ENCODE measurements at regions of chr11 and their contacts with region 1.

Region 1: GRCh38 chr11:9972989-9973388 is 309.1 kb downstream of the SWAP70 start:
- DNase-seq: no peak

Region 2: DNA sequence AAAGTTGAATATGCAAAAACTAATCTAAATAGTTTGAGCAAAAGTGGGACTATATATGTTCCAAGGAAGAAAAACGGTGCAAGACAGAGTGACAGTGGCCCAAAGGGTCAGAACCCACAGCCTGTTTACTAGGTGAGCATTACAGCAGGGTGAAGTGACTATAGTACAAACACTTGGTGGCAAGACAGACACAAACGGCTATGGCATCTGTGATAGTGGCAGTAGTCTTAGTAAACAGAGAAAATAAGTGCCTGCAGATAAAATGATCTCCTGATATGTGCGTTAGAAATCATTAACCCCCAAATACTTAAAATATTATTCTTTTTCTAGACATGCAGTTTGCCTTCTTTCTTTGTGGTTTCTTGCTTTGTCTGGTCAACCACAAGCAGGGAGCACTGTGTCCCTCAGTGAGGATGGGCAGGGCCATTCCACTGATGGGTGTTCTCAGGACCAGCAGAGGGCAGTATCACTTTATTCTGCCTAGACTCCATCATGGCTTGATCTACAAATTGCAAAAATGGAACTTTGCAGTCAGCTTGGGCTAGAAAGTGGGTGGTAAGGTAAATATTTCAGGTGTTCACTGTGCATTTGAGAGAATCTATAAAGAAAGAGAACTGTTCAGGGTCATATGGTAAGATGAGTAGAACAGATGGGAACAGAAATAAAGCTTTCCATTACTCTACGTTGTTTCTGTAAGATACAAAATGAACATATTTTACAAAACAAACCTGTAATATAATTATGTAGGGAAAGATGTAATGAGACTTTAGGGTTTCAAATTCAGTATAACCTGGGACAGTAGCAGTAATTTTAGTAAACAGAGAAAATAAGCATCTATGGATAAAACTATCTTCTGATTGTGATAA is 110.9 kb before region 1 on chr11:
- intact Hi-C with region 1: loop called (anchors 10 kb)
- DNase-seq: no peak

Region 3: DNA sequence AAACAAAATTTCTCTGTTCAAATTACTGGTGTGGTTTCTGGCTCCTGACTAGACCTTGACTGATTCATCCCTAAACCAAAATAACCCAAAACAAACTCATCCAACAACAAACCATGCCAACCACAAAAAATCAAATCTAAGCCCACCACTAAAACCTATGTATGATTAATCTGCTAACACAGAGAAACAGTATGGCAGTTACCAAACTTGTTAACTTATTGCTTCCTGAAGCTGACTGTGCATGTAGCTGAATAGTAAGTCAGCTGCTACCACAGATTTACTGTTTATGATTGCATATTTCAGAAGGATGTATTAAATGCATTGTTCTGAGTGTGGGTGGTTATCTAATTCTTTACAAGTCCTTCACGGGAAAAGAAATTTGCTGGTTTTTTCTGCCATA is 78.0 kb before region 1 on chr11:
- intact Hi-C with region 1: no loop called
- DNase-seq: no peak

Region 4: DNA sequence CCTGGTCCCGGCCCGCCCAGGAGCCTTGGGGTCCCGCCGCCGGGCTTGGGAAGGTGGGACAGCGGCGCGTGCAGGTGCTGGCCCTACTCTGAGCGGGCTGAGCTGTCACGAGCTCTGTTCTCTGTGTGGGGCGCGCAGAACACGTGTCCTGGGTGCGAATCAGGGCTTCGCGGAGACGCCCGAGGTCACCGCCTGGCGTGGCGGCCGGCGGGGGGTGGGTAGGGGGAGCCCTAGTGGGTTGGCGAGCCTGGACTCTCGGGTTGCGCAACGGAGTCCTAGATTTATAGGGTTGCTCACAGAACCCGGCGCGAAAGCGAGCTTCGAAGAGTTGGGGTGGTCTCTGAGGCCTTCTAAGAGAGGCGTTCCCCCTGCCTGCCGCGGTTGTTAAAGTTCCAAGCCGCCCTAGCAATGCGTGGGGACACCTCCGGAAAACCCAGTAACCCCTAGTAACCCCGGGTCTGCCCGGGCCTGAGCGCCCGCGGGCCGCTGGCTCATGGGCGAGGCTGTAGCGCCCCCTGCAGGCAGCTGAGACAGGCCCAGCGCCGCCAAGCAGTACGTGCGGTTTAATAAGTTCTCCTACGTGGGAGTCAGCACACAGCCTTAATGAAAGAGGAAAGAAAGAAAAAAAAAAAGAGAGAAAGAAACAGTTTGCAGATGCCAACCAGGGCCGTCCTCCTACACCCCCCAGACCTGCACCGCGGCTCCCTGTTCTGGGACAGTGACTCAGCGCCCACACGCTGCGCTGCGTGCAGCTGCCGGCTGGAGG is 334.6 kb after region 1 on chr11:
- intact Hi-C with region 1: loop called (anchors 2 kb)
- DNase-seq: peak; percentile 93

Region 5: DNA sequence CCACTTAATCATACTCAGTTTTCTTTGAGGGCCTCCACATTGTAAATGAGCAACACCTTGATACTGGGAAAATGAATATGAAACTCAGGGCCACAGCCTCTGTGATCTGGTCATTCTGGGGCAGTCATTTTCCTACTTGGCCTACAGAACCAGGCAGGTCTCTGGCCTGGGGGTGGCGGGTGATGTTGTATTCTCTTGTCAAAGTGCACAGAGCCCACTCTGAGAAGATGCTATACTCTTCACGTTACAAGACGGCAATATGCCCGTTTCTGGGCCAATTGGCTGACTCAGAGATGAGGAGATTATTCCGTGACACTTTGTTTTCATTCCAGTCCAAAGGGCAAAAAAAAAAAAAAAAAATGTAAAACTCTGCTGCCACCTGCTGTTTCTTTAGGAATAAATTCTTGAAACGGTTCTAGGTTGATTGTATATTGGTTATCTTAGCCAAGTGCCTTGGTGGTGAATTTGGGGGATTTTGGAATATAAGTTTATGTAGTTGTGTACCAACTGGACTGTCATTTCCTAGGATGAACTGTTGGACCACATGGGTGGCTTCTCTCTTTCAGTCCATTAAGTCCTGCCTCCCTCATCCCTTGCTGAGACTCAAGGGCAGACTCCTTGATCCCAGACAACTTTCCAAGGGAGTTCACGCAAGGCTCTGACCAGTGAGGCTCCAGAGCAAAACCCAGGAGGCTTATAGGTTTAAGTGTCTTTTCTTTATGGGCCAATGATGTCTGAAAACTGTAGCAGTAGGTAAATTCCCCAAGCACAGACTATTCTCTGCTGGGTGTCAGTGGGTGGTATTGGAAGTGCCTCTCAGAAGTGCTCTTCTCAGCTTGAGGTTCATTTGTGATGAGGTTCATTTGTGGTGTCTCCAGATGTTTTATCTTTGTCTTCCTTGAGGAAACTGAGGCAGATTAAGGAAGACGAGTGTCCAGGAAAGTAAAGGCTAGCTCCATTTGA is 350.1 kb after region 1 on chr11:
- intact Hi-C with region 1: loop called (anchors 5 kb)
- DNase-seq: no peak

Region 6: GRCh38 chr11:10550503-10551289 is 577.7 kb after region 1 on chr11:
- intact Hi-C with region 1: no loop called
- DNase-seq: no peak